ENCODE measurements at regions of chr16 and their contacts with region 1.

Region 1: GRCh38 chr16:30445408-30446202 is at the start of gene SEPHS2:
- DNase-seq: peak; percentile 93 to 98 (median 94)
- ATAC-seq: peak; percentile 95
- H3K4me3 ChIP-seq: peak within 1 kb of the TSS; percentile 69 to 73
- H3K4me3 Mint-ChIP-seq: peak within 1 kb of the TSS; percentile 92
- H3K27ac ChIP-seq: peak within 1 kb of the TSS; percentile 76 to 80
- H3K27ac Mint-ChIP-seq: peak within 1 kb of the TSS; percentile 95
- H3K4me1 ChIP-seq: peaks cover 32% of the 10 kb centered on the region
- H3K4me1 Mint-ChIP-seq: peaks cover 42% of the 10 kb centered on the region
- H3K27me3 ChIP-seq: no peaks in the 10 kb centered on the region
- H3K27me3 Mint-ChIP-seq: no peaks in the 10 kb centered on the region
- CTCF ChIP-seq: peak; percentile 31
- total RNA-seq, gene SEPHS2: 22.6 to 24.1 TPM

Region 2: DNA sequence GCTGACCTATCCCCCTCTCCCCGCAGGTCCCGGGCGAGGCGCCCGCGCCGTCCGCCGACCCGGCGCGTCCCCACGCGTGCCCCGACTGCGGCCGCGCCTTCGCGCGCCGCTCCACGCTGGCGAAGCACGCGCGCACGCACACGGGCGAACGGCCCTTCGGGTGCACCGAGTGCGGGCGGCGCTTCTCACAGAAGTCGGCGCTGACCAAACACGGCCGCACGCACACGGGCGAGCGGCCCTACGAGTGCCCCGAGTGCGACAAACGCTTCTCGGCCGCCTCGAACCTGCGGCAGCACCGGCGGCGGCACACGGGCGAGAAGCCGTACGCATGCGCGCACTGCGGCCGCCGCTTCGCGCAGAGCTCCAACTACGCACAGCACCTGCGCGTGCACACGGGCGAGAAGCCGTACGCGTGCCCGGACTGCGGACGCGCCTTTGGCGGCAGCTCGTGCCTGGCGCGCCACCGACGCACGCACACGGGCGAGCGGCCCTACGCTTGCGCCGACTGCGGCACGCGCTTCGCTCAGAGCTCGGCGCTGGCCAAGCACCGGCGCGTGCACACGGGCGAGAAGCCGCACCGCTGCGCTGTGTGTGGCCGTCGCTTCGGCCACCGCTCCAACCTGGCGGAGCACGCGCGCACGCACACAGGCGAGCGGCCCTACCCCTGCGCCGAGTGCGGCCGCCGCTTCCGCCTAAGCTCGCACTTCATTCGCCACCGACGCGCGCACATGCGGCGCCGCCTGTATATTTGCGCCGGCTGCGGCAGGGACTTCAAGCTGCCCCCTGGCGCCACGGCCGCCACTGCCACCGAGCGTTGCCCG is 27.9 kb before region 1 on chr16:
- CTCF ChIA-PET with region 1: interaction called, 8 read pairs
- POLR2A ChIA-PET with region 1: interaction called, 10 read pairs
- intact Hi-C with region 1: no loop called
- DNase-seq: peak; percentile 78 to 98 (median 88)
- ATAC-seq: peak; percentile 87
- H3K4me3 ChIP-seq: peak overlapping the region; percentile 52 to 72
- H3K4me3 Mint-ChIP-seq: peak overlapping the region; percentile 74
- H3K27ac ChIP-seq: peak overlapping the region; percentile 81 to 91
- H3K27ac Mint-ChIP-seq: peak overlapping the region; percentile 77
- H3K4me1 ChIP-seq: peaks cover 18% of the 10 kb centered on the region
- H3K4me1 Mint-ChIP-seq: peaks cover 7% of the 10 kb centered on the region
- H3K27me3 ChIP-seq: no peaks in the 10 kb centered on the region
- H3K27me3 Mint-ChIP-seq: no peaks in the 10 kb centered on the region
- CTCF ChIP-seq: no peak

Region 3: GRCh38 chr16:30466766-30467165 is 21.2 kb after region 1 on chr16:
- CTCF ChIA-PET with region 1: interaction called, 45 read pairs
- POLR2A ChIA-PET with region 1: interaction called, 26 read pairs
- intact Hi-C with region 1: no loop called
- DNase-seq: no peak
- ATAC-seq: no peak
- H3K4me3 ChIP-seq: no peak overlapping the region
- H3K4me3 Mint-ChIP-seq: no peak overlapping the region
- H3K27ac ChIP-seq: no peak overlapping the region
- H3K27ac Mint-ChIP-seq: peak overlapping the region; percentile 27
- H3K4me1 ChIP-seq: peaks cover 41% of the 10 kb centered on the region
- H3K4me1 Mint-ChIP-seq: peaks cover 44% of the 10 kb centered on the region
- H3K27me3 ChIP-seq: no peaks in the 10 kb centered on the region
- H3K27me3 Mint-ChIP-seq: no peaks in the 10 kb centered on the region
- CTCF ChIP-seq: no peak

Region 4: GRCh38 chr16:30491744-30492308 is 46.2 kb after region 1 on chr16:
- CTCF ChIA-PET with region 1: interaction called, 46 read pairs
- POLR2A ChIA-PET with region 1: interaction called, 5 read pairs
- intact Hi-C with region 1: no loop called
- DNase-seq: peak in 7 of 9 experiments; percentile 21 to 57 (median 30)
- ATAC-seq: peak; percentile 48
- H3K4me3 ChIP-seq: no peak overlapping the region
- H3K4me3 Mint-ChIP-seq: no peak overlapping the region
- H3K27ac ChIP-seq: no peak overlapping the region
- H3K27ac Mint-ChIP-seq: peak overlapping the region; percentile 78
- H3K4me1 ChIP-seq: peaks cover 7% of the 10 kb centered on the region
- H3K4me1 Mint-ChIP-seq: peaks cover 21% of the 10 kb centered on the region
- H3K27me3 ChIP-seq: no peaks in the 10 kb centered on the region
- H3K27me3 Mint-ChIP-seq: no peaks in the 10 kb centered on the region
- CTCF ChIP-seq: no peak

Region 5: GRCh38 chr16:30519120-30520049 is 73.8 kb after region 1 on chr16:
- CTCF ChIA-PET with region 1: interaction called, 10 read pairs
- POLR2A ChIA-PET with region 1: no interaction called
- intact Hi-C with region 1: no loop called
- DNase-seq: no peak
- ATAC-seq: peak; percentile 69
- H3K4me3 ChIP-seq: no peak overlapping the region
- H3K4me3 Mint-ChIP-seq: no peak overlapping the region
- H3K27ac ChIP-seq: peak overlapping the region in 1 of 2 experiments; percentile 19
- H3K27ac Mint-ChIP-seq: peak overlapping the region; percentile 74
- H3K4me1 ChIP-seq: peaks cover 13% of the 10 kb centered on the region
- H3K4me1 Mint-ChIP-seq: peaks cover 18% of the 10 kb centered on the region
- H3K27me3 ChIP-seq: no peaks in the 10 kb centered on the region
- H3K27me3 Mint-ChIP-seq: no peaks in the 10 kb centered on the region
- CTCF ChIP-seq: no peak

Region 6: DNA sequence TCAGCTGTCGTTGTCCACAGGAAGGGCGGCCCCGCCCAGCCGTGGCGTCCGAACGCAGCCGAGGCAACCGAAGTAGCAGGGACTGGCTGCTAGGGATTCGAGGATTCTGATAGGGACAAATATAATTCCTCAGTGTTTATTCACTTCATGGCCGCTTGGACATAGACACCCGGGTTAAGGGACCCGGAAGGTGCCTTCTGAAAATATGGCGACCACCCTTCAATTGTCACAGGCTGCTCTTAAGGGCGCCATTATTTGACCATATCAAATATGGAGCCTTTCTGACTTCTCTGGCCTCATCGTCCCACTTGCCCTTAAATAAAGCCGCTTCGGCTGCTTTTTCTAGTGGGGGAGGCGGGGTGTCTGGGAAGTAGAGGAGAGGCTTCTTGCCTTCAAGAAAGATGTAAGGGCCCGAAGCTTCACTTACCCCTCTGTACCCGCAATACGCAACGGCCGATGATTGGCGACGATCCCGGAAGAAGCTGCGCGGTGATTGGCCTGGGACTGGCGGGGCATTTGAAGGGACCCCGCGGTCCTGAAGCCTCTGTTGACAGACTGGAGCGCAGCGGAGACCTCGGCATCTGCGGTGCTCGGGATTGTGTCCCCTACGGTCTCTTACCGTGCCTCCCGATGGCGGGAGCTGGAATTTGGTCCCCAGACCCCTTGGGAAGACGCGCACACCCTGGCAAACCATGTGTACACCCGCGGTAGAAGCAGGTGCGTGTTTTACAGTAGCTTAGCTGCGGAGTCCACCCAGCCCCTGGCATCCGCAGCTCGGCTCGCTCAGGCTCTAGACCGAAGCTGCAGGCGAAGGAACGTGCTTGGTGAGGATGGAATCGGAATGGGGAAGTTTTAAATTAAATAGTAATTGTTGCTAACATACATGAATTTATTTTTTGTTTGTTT is 126.3 kb after region 1 on chr16 and contains the start of gene ZNF688:
- CTCF ChIA-PET with region 1: interaction called, 3 read pairs
- POLR2A ChIA-PET with region 1: interaction called, 10 read pairs
- intact Hi-C with region 1: no loop called
- DNase-seq: peak; percentile 89 to 99 (median 94)
- ATAC-seq: peak; percentile 81
- H3K4me3 ChIP-seq: peak within 1 kb of the TSS; percentile 85 to 86
- H3K4me3 Mint-ChIP-seq: peak within 1 kb of the TSS; percentile 90
- H3K27ac ChIP-seq: peak within 1 kb of the TSS; percentile 84 to 94
- H3K27ac Mint-ChIP-seq: peak within 1 kb of the TSS; percentile 98
- H3K4me1 ChIP-seq: peaks cover 40% of the 10 kb centered on the region
- H3K4me1 Mint-ChIP-seq: peaks cover 34% of the 10 kb centered on the region
- H3K27me3 ChIP-seq: no peaks in the 10 kb centered on the region
- H3K27me3 Mint-ChIP-seq: no peaks in the 10 kb centered on the region
- CTCF ChIP-seq: no peak
- total RNA-seq, gene ZNF688: 6.1 to 7.1 TPM